CD14-positive monocyte (primary cell): ENCODE measurements at regions of chr6 and their contacts with region 1.

Region 1: DNA sequence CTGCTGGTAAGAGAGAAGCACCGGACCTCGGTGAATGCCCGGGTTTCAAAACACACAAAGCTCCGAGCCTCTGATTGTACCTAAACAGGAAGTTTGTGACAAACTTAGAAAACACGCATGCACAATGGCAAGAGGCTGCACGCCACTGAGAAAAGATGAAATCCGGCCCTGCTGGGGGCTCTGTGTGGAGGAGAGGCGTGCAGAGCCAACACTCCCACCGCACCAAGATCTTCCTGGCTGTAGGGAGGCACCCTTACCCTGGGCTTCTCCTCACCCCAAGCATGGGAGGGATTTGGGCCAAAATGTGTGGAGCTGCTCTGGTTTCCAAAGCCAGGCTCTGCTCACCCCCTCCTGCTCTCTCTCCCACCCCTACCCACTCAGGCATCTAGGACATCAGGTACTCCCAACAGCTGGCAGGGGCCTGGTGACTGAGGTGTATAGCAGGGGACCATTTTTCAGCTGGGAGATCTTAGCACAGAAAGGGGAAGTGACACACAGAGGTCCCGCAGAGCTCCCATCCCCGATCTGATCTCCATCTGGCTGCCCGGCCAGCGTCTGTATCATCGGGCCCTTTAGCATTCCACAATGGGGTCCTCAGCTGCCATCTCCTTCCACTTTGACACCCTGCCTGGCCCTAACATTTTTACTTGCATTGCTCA is 84.2 kb downstream of the TRERF1 start:
- DNase-seq: peak; percentile 87 to 97 (median 95)
- H3K4me3 ChIP-seq: peak overlapping the region; percentile 21 to 68 (median 25)
- H3K4me3 Mint-ChIP-seq: peak overlapping the region; percentile 73 to 87
- H3K27ac ChIP-seq: peak overlapping the region; percentile 95 to 98
- H3K27ac Mint-ChIP-seq: peak overlapping the region; percentile 88 to 99 (median 94)
- H3K4me1 ChIP-seq: peaks cover 82 to 96% of the 10 kb centered on the region in 2 donors
- H3K4me1 Mint-ChIP-seq: peaks cover 90% of the 10 kb centered on the region
- H3K27me3 ChIP-seq: no peaks in the 10 kb centered on the region
- H3K27me3 Mint-ChIP-seq: peaks cover 0 to 3% (median 0%) of the 10 kb centered on the region in 3 donors
- CTCF ChIP-seq: no peak

Region 2: DNA sequence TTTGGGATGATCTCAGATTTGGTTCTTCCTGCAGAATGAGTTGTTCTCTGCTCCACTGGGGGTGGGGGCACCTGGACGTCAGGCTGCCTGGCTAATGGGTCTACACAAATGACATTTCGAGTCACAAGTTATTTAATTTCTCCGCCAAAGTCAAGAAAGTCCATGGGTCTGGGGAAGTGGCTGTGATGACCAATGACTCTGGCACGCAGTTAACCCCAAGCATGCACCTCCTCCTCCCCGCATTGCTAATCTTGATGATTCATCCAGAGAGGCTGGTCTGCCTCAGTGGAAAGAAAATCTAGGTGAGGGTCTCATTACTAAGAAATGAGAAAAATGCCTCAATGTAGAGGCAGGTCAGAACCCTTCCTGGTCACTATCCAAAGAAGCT is 51.5 kb before region 1 on chr6:
- intact Hi-C with region 1: loop called (anchors 2 to 10 kb)
- DNase-seq: peak; percentile 91 to 97 (median 92)
- H3K4me3 ChIP-seq: no peak overlapping the region
- H3K4me3 Mint-ChIP-seq: peak overlapping the region in 1 of 2 donors; percentile 55
- H3K27ac ChIP-seq: peak overlapping the region; percentile 96 to 100
- H3K27ac Mint-ChIP-seq: peak overlapping the region; percentile 99 to 100 (median 100)
- H3K4me1 ChIP-seq: peaks cover 49 to 67% of the 10 kb centered on the region in 2 donors
- H3K4me1 Mint-ChIP-seq: peaks cover 74% of the 10 kb centered on the region
- H3K27me3 ChIP-seq: no peaks in the 10 kb centered on the region
- H3K27me3 Mint-ChIP-seq: peaks cover 0 to 2% (median 0%) of the 10 kb centered on the region in 3 donors
- CTCF ChIP-seq: no peak

Region 3: DNA sequence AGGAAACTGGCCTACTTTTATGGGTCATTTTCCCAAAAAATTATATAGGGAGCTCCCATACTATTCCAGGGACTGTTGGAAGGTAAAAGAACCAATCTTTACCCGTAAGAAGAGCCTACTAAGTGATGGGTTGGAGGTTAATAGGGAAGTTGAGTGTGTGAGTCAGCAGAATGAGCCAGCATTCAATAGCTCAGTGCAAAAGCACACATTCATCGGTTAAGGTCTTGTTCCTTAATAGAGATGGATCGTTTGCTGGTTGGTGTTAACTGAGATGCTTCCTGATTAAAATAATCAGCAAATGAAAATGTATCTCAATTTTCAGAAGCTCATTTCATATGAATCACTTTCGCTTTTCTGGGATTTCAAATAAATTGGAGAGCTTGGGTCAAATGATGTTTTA is 34.6 kb before region 1 on chr6:
- intact Hi-C with region 1: loop called (anchors 5 kb)
- DNase-seq: peak; percentile 80 to 91 (median 90)
- H3K4me3 ChIP-seq: peak overlapping the region in 1 of 3 experiments; percentile 40
- H3K4me3 Mint-ChIP-seq: peak overlapping the region in 1 of 2 donors; percentile 76
- H3K27ac ChIP-seq: peak overlapping the region; percentile 92
- H3K27ac Mint-ChIP-seq: peak overlapping the region; percentile 86 to 97 (median 94)
- H3K4me1 ChIP-seq: peaks cover 68 to 75% of the 10 kb centered on the region in 2 donors
- H3K4me1 Mint-ChIP-seq: peaks cover 84% of the 10 kb centered on the region
- H3K27me3 ChIP-seq: no peaks in the 10 kb centered on the region
- H3K27me3 Mint-ChIP-seq: peaks cover 0 to 2% (median 0%) of the 10 kb centered on the region in 3 donors
- CTCF ChIP-seq: no peak

Region 4: GRCh38 chr6:42407379-42407778 is 39.9 kb after region 1 on chr6:
- intact Hi-C with region 1: loop called (anchors 5 kb)
- DNase-seq: peak; percentile 66 to 93 (median 72)
- H3K4me3 ChIP-seq: peak overlapping the region in 1 of 3 experiments; percentile 12
- H3K4me3 Mint-ChIP-seq: no peak overlapping the region
- H3K27ac ChIP-seq: peak overlapping the region; percentile 20 to 67
- H3K27ac Mint-ChIP-seq: peak overlapping the region in 6 of 7 donors; percentile 63 to 90 (median 80)
- H3K4me1 ChIP-seq: peaks cover 80 to 89% of the 10 kb centered on the region in 2 donors
- H3K4me1 Mint-ChIP-seq: peaks cover 80% of the 10 kb centered on the region
- H3K27me3 ChIP-seq: no peaks in the 10 kb centered on the region
- H3K27me3 Mint-ChIP-seq: no peaks in the 10 kb centered on the region
- CTCF ChIP-seq: no peak

Region 5: DNA sequence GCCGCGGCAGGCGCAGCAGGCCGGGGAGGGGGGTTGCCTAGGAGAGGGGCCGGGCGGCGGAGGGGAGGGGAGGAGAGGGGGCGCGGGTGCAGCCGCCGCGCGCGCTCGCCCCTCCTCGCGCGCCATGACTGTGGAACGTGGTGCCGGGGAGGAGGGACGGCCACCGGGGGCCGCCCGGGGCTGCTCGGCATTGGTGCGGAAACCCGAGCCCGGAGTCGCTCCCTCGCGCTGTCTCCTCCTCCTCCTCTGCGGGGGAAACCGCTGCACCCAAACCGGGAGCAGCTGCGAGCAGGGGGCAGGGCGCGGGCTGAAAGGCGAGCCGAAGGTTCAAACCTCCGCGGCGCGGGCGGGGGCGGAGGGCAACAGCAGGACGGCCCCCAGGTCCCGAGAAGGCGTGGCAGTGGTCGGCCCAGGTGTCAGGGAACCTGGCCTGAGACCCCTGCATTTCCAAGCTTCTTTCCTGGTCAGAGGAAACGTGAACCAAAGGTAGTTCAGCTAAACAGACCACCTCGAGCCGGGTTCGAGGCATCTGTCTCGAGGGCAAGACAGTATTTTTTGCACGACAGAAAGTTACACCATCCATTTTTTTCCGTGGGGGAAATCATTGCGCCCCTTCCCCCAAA is 85.7 kb after region 1 on chr6:
- intact Hi-C with region 1: loop called in 1 of 2 experiments (anchors 5 kb)
- DNase-seq: peak; percentile 26 to 40 (median 33)
- H3K4me3 ChIP-seq: peak overlapping the region; percentile 53 to 96 (median 63)
- H3K4me3 Mint-ChIP-seq: peak overlapping the region; percentile 98 to 100
- H3K27ac ChIP-seq: peak overlapping the region; percentile 39 to 82
- H3K27ac Mint-ChIP-seq: peak overlapping the region in 1 of 7 donors; percentile 13
- H3K4me1 ChIP-seq: peaks cover 42 to 43% of the 10 kb centered on the region in 2 donors
- H3K4me1 Mint-ChIP-seq: peaks cover 38% of the 10 kb centered on the region
- H3K27me3 ChIP-seq: peaks cover 0 to 4% of the 10 kb centered on the region in 2 donors
- H3K27me3 Mint-ChIP-seq: peaks cover 11 to 19% (median 14%) of the 10 kb centered on the region in 3 donors
- CTCF ChIP-seq: no peak